ENCODE measurements at regions of chrX and their contacts with region 1.

Region 1: DNA sequence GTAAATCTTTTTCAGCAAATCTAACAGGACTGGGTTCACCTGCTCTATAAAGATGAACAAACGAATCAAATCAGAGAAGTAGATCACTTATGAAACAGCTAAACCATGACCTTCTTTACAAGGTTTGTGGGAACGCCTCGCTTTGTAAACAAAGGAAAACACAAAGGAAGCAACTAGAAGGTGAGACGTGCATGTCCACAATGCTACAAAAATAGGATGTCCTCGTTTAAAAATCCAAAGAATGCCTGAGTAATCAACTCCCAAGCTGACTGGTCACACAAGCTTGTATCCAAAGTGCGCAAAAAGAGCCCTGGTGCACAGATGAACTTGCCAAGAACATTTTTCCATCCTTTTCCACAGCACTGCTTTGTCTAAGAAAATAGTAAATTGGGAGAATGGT is 6.3 kb upstream of the SH3KBP1 start:
- DNase-seq: no peak
- H3K4me3 ChIP-seq: no peak overlapping the region
- H3K27ac ChIP-seq: no peak overlapping the region
- H3K4me1 ChIP-seq: no peaks in the 10 kb centered on the region
- H3K27me3 ChIP-seq: no peaks in the 10 kb centered on the region
- CTCF ChIP-seq: no peak

Region 2: DNA sequence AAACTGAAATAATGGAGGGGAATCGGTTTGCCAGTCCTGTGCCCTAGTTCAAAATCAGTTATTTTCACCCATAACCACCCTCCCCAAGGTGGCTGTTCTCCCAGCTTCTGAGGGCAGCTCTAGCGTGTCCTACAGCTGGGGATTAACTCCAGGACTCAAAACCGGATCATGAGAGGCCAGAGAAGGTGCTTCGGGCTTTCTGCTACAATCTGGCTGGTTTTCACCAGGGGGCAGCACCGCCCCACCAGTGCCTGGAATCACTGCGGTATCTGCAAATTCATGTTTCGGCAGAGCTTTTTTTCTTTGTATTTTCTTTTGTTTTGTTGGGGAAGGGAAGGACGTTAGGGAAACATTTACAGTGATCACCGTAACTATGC is 521.6 kb before region 1 on chrX:
- CTCF ChIA-PET with region 1: interaction called, 10 read pairs
- POLR2A ChIA-PET with region 1: no interaction called
- intact Hi-C with region 1: no loop called
- DNase-seq: peak; percentile 81
- H3K4me3 ChIP-seq: peak overlapping the region; percentile 39
- H3K27ac ChIP-seq: no peak overlapping the region
- H3K4me1 ChIP-seq: no peaks in the 10 kb centered on the region
- H3K27me3 ChIP-seq: peaks cover 6% of the 10 kb centered on the region
- CTCF ChIP-seq: peak; percentile 90